PC-9 (cell line): ENCODE measurements at regions of chr10 and their contacts with region 1.

Region 1: DNA sequence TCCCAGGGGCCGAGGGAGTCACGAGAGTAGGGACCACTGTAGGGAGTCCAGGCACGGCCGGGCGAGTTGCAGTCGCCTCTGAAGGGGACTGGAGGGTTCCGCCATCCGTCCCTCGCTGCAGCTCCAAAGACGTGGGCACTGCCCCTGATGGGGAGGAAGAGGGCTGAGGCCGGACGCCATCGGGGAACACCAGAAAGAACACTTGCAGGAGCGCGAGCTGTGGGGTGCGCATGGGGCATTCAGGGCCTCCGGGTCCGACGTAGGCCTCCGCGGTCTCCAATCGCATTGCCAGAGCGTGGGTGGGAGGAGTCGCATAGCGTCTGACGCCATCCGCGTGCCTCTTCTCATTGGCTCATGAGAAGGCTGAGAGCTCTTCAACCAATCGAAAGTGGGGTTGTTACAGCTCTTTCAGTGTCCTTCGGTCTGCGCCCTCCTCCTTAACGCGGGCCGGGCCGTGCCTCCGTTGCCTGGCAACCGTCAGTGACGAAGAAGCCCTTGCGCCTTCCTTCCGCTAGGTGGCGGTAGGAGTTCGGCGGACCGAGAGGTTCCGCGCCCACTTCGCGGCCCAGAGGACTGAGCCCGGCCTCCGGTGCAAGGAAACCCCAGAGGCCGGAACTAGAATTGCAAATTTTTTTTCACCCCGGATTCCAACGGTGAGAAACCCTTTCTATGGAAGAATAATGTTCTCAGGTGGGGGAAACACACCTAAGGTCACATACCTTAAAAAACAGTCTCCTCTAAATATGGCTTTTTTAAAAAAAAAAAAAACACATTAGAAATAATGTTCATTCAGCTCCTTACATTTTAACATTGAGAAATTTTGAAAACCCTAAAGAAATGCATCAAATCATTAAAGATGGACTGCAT is at the start of gene TCTN3:
- DNase-seq: peak; percentile 92 to 98
- H3K4me3 ChIP-seq: peak within 1 kb of the TSS; percentile 95
- H3K27ac ChIP-seq: no peak within 1 kb of the TSS
- H3K4me1 ChIP-seq: peaks cover 5% of the 10 kb centered on the region; the same call in 1 of the 2 replicates
- H3K27me3 ChIP-seq: no peaks in the 10 kb centered on the region
- CTCF ChIP-seq: peak; percentile 89
- total RNA-seq, gene TCTN3: 18.1 and 19.8 TPM in 2 replicates

Region 2: GRCh38 chr10:95544783-95545500 is 149.0 kb before region 1 on chr10:
- CTCF ChIA-PET with region 1: no interaction called
- POLR2A ChIA-PET with region 1: no interaction called
- intact Hi-C with region 1: no loop called
- DNase-seq: no peak
- H3K4me3 ChIP-seq: no peak overlapping the region
- H3K27ac ChIP-seq: no peak overlapping the region
- H3K4me1 ChIP-seq: no peaks in the 10 kb centered on the region
- H3K27me3 ChIP-seq: no peaks in the 10 kb centered on the region
- CTCF ChIP-seq: no peak

Region 3: GRCh38 chr10:95559471-95559870 is 134.4 kb before region 1 on chr10:
- CTCF ChIA-PET with region 1: no interaction called
- POLR2A ChIA-PET with region 1: no interaction called
- intact Hi-C with region 1: no loop called
- DNase-seq: no peak
- H3K4me3 ChIP-seq: no peak overlapping the region
- H3K27ac ChIP-seq: no peak overlapping the region
- H3K4me1 ChIP-seq: no peaks in the 10 kb centered on the region
- H3K27me3 ChIP-seq: no peaks in the 10 kb centered on the region
- CTCF ChIP-seq: no peak

Region 4: DNA sequence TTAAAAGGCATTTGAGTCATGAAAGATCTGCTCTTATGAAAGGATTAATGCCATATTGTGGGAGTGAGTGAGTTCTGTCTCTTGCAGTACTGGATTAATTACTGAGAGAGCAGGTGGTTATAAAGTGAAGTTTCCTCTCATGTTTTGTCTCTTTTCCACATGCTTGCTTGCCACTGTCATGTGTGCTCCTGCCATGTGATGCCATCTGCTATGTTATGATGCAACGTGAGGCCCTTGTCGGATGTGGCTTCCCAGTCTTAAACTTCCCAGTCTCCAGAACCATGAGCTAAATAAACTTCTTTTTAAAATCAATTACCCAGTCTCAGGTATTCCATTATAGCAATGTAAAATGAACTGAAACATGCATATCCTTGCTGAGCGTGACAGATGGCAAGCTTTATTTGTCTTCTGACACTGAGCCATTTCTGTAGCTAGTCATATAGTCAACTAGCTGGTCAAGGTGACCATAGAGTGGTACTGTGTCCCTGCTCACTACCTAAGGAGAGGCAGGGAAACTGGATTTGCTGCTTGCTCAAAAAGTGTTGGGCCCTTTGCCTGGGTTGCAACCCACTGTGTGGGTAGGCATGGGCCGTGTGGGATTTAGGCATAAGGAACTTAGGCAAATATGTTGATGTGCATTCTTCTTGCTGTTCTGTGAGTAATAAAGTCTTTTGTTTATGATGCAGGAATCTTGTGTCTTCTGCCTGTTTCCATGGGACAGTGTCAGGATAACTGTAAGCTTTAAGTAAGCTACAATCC is 22.7 kb after region 1 on chr10:
- CTCF ChIA-PET with region 1: interaction called, 4 read pairs
- POLR2A ChIA-PET with region 1: interaction called, 4 read pairs
- intact Hi-C with region 1: loop called (anchors 1 kb)
- DNase-seq: no peak
- H3K4me3 ChIP-seq: no peak overlapping the region
- H3K27ac ChIP-seq: no peak overlapping the region
- H3K4me1 ChIP-seq: peaks cover 15% of the 10 kb centered on the region
- H3K27me3 ChIP-seq: no peaks in the 10 kb centered on the region
- CTCF ChIP-seq: no peak

Region 5: DNA sequence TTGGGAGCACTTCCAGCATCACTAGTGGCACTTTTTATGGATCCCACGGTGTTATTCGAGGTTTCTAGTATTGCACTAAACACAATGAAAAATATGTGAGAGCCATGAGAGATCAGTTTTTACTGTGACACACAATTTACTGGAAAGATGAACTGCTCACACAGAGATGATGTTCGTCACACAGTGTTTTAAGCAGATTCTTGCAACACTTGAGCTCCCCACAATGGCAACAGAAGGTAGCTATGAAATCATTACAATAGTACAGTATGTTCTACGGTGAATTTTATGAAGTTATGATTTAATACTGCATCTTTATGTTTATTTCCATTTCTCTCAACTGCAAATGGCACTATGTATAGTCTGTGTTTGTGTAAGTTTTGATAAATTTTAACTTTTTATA is 34.6 kb after region 1 on chr10:
- CTCF ChIA-PET with region 1: interaction called, 14 read pairs
- POLR2A ChIA-PET with region 1: interaction called, 13 read pairs
- intact Hi-C with region 1: loop called (anchors 2 kb)
- DNase-seq: no peak
- H3K4me3 ChIP-seq: no peak overlapping the region
- H3K27ac ChIP-seq: no peak overlapping the region
- H3K4me1 ChIP-seq: no peaks in the 10 kb centered on the region
- H3K27me3 ChIP-seq: no peaks in the 10 kb centered on the region
- CTCF ChIP-seq: no peak

Region 6: DNA sequence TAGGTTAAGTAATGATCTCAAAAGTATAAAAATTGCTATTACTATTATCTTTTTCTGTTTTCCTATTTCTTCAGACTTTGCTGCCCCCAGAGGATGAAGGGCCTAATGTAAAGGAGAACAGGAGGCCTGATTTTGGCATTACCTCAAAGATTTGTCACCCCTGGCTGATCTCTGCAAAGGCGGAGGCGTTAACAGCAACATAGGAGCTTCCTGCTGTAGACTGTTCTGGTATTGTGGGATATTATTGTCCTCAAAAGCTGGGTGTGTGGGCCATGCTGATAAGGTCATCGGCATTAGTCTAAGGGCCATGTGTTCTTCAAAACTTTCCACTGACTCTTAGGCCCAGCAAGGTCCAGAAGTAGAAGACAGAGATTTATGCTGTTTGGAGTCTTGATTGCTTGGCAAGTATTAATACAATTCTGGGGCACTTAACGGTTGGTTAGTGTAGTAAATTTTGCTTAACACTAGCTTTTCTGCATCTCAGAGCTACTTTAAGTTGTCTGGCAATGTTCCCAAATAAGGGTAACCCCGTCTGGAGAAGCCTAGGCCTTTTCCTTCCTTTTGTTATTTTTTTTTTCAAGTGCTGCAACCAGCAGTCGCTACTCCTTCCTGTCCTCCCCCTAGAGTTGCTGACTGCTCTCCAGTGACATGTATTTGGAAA is 48.0 kb after region 1 on chr10:
- CTCF ChIA-PET with region 1: no interaction called
- POLR2A ChIA-PET with region 1: no interaction called
- intact Hi-C with region 1: no loop called
- DNase-seq: no peak
- H3K4me3 ChIP-seq: no peak overlapping the region
- H3K27ac ChIP-seq: no peak overlapping the region
- H3K4me1 ChIP-seq: no peaks in the 10 kb centered on the region
- H3K27me3 ChIP-seq: no peaks in the 10 kb centered on the region
- CTCF ChIP-seq: no peak

Region 7: GRCh38 chr10:95841661-95842498 is 148.0 kb after region 1 on chr10:
- CTCF ChIA-PET with region 1: interaction called, 29 read pairs
- POLR2A ChIA-PET with region 1: interaction called, 5 read pairs
- intact Hi-C with region 1: loop called (anchors 1 kb)
- DNase-seq: peak in 1 of 2 experiments; percentile 6
- H3K4me3 ChIP-seq: no peak overlapping the region
- H3K27ac ChIP-seq: no peak overlapping the region
- H3K4me1 ChIP-seq: no peaks in the 10 kb centered on the region
- H3K27me3 ChIP-seq: no peaks in the 10 kb centered on the region
- CTCF ChIP-seq: peak; percentile 73

Region 8: DNA sequence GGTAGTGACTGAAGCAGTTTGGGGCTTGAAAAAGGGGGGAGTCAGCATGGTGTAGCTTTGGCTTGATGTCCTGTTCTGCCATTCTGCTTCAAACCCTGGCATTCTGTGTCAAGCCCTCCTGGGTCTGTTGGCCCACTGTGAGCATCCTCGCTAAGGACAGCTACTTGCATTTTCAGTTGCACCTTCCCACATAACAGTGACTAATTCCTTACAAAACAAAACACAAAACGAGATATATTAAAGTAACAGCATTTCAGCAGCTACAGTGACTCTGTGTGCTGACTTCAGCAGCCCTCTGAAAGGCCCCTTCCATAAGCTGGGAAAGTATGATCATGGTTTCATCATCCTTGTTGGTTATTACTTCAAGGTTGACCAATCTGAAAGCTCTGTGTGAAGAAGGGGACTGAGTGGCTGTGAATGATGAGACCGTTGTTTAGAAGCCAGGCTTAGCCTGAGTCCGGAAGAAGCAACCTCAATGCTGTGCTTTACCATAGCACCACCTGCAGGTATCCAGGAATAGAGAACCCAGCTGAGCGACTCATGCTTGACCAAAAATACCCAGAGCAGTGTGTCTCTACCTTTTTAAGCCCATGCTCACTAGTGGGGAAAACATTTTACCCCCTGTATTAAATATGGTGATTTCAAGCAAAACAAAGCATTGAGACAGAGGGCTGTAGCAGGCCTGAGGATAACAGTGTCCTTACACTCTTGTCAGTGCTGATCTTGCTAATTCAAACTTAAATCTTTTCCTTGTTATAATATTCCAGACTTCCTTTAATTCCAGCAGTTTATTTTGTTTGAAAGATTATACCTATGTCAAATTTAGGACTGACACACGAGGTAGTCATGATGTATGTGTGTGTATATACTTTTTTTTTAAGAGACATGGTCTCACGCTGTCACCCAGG is 171.3 kb after region 1 on chr10:
- CTCF ChIA-PET with region 1: interaction called, 5 read pairs
- POLR2A ChIA-PET with region 1: no interaction called
- intact Hi-C with region 1: loop called (anchors 1 kb)
- DNase-seq: peak in 1 of 2 experiments; percentile 7
- H3K4me3 ChIP-seq: no peak overlapping the region
- H3K27ac ChIP-seq: no peak overlapping the region
- H3K4me1 ChIP-seq: no peaks in the 10 kb centered on the region
- H3K27me3 ChIP-seq: no peaks in the 10 kb centered on the region
- CTCF ChIP-seq: peak; percentile 58

Region 9: DNA sequence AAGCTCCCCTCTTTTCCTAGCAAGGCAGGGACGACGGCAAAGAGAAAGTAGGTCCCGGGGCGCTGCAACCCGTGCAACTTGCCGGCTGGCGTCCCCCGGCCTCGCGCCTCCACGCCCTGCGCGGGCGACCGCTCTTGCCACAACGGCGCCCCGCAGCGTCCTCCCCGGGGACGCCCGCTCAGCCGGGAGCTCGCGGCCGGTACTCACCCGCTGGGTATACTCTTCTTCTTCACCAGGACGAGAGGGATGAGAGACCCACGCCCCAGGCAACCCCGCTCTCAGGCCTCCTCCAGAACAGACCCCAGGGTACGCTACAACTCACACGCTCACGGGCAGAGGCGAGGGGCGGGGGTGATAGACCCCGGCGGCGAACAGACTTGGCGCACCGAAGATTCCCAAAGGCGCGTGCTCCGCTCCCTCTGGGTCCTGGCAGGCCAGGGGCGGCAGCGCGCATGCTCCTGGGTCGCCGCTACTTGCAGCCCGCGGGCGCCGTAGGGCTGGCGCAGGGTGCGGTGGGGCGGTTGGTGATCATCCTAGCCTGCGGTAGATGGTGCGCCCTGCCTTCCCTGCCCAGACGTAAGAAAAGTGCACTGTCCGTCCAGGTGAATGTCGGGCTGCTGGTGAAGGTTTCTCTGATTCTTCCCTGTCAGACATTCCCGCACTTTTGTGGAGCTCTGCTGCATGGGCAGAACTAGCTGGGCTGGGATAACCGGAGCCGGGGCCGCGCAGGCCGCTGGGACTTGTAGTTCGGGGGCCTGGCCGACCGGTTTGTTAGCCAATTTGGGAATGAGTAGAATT is 213.8 kb after region 1 on chr10 and contains the start of gene CC2D2B:
- CTCF ChIA-PET with region 1: interaction called, 3 read pairs
- POLR2A ChIA-PET with region 1: no interaction called
- intact Hi-C with region 1: loop called (anchors 5 kb)
- DNase-seq: peak; percentile 49 to 69
- H3K4me3 ChIP-seq: peak within 1 kb of the TSS; percentile 88
- H3K27ac ChIP-seq: no peak within 1 kb of the TSS
- H3K4me1 ChIP-seq: no peaks in the 10 kb centered on the region
- H3K27me3 ChIP-seq: no peaks in the 10 kb centered on the region
- CTCF ChIP-seq: no peak
- total RNA-seq, gene CC2D2B: not detected in 2 replicates

Region 10: GRCh38 chr10:96043033-96043932 is 349.4 kb after region 1 on chr10 and contains the start of gene CCNJ:
- CTCF ChIA-PET with region 1: no interaction called
- POLR2A ChIA-PET with region 1: no interaction called
- intact Hi-C with region 1: loop called (anchors 5 kb)
- DNase-seq: peak; percentile 64 to 81
- H3K4me3 ChIP-seq: peak within 1 kb of the TSS; percentile 75
- H3K27ac ChIP-seq: peak within 1 kb of the TSS; percentile 37
- H3K4me1 ChIP-seq: peaks cover 15% of the 10 kb centered on the region; the same call in 1 of the 2 replicates
- H3K27me3 ChIP-seq: no peaks in the 10 kb centered on the region
- CTCF ChIP-seq: no peak
- total RNA-seq, gene CCNJ: 2.5 TPM in 2 replicates